Activated naive CD4-positive, alpha-beta T cell treated with anti-CD3 and anti-CD28 coated beads for 36 hours (primary cell): ENCODE measurements at regions of chr1 and their contacts with region 1.

Region 1: GRCh38 chr1:67685067-67685557 is at the start of gene GADD45A:
- DNase-seq: peak; percentile 98
- H3K4me3 Mint-ChIP-seq: peak within 1 kb of the TSS; percentile 90
- H3K27ac Mint-ChIP-seq: peak within 1 kb of the TSS; percentile 92
- H3K4me1 Mint-ChIP-seq: peaks cover 46% of the 10 kb centered on the region
- H3K27me3 Mint-ChIP-seq: no peaks in the 10 kb centered on the region
- total RNA-seq, gene GADD45A: 47.0 to 48.3 TPM

Region 2: DNA sequence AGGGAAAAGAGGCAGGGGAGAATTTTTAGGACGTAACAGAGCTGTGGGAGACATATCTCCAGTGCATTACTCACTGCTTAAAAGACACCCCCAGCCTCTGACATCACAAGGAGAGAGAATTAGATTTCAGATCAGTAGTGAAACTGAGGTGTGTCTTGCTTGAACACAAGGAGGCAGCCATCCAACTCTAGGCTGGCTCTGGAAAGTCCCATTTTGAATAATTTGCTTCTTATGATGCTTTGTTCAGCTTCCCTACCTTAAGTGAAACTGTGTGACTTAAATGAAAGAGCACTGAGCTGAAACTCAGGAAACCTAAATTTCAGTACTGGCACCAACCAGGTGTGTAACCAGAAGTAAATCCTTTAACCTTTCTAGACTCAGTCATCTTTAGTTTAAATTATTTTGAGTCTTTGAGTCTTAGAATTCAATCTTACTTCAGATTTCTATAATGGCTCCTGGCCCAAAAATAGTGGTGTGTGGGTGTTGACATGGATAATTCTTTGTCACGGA is 1402.7 kb before region 1 on chr1:
- CTCF ChIA-PET with region 1: no interaction called
- intact Hi-C with region 1: loop called (anchors 10 kb)
- DNase-seq: peak; percentile 89
- H3K4me3 Mint-ChIP-seq: peak overlapping the region; percentile 17
- H3K27ac Mint-ChIP-seq: peak overlapping the region; percentile 89
- H3K4me1 Mint-ChIP-seq: peaks cover 87% of the 10 kb centered on the region
- H3K27me3 Mint-ChIP-seq: no peaks in the 10 kb centered on the region

Region 3: GRCh38 chr1:66929999-66930822 is 754.9 kb before region 1 on chr1:
- CTCF ChIA-PET with region 1: no interaction called
- intact Hi-C with region 1: loop called (anchors 1 kb)
- DNase-seq: peak; percentile 92
- H3K4me3 Mint-ChIP-seq: peak overlapping the region; percentile 84
- H3K27ac Mint-ChIP-seq: peak overlapping the region; percentile 92
- H3K4me1 Mint-ChIP-seq: peaks cover 51% of the 10 kb centered on the region
- H3K27me3 Mint-ChIP-seq: no peaks in the 10 kb centered on the region

Region 4: GRCh38 chr1:67174716-67175284 is 510.3 kb before region 1 on chr1:
- CTCF ChIA-PET with region 1: no interaction called
- intact Hi-C with region 1: loop called (anchors 1 kb)
- DNase-seq: peak; percentile 63
- H3K4me3 Mint-ChIP-seq: peak overlapping the region; percentile 7
- H3K27ac Mint-ChIP-seq: peak overlapping the region; percentile 99
- H3K4me1 Mint-ChIP-seq: peaks cover 81% of the 10 kb centered on the region
- H3K27me3 Mint-ChIP-seq: no peaks in the 10 kb centered on the region

Region 5: GRCh38 chr1:67339623-67340343 is 345.3 kb before region 1 on chr1:
- CTCF ChIA-PET with region 1: no interaction called
- intact Hi-C with region 1: loop called (anchors 1 kb)
- DNase-seq: peak; percentile 75
- H3K4me3 Mint-ChIP-seq: peak overlapping the region; percentile 1
- H3K27ac Mint-ChIP-seq: peak overlapping the region; percentile 97
- H3K4me1 Mint-ChIP-seq: peaks cover 83% of the 10 kb centered on the region
- H3K27me3 Mint-ChIP-seq: no peaks in the 10 kb centered on the region

Region 6: GRCh38 chr1:67372136-67372535 is 313.0 kb before region 1 on chr1:
- CTCF ChIA-PET with region 1: no interaction called
- intact Hi-C with region 1: no loop called
- DNase-seq: no peak
- H3K4me3 Mint-ChIP-seq: no peak overlapping the region
- H3K27ac Mint-ChIP-seq: no peak overlapping the region
- H3K4me1 Mint-ChIP-seq: peaks cover 1% of the 10 kb centered on the region
- H3K27me3 Mint-ChIP-seq: no peaks in the 10 kb centered on the region

Region 7: DNA sequence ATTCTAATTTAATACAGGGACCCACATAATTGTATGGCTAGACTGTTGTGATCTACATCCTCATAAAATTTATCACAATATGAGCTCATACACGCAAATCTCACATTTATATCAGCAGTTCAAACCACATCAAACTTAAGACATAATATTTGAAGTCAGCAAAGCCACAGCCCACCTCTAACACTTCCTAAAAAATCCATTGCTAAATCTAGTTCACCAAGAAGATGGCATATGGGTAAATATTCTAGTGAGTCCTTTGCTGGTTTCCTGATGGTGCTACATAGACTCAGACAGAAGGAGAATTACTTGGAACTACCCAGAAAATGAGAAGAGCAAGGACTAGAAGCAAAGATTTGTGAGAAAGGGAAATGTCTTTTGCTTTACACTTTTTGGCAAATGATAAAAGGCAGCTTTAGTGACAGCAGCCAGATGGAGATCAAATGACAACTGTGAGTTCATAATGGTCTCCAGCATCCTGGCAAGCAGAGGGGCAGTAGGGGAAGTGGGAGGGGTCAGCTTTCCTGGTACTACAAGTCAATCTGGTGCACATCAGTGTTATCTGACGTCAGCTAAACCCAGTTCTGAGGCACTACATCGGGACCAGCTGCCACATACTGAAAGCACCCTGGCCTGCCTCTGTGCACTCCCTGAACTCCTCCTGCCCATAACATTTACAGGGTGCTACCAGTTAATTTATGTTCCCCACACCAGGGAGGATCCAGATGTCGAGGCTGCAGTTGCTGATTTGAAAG is 10.7 kb before region 1 on chr1:
- CTCF ChIA-PET with region 1: interaction called, 5 read pairs
- intact Hi-C with region 1: loop called (anchors 1 kb)
- DNase-seq: peak; percentile 82
- H3K4me3 Mint-ChIP-seq: peak overlapping the region; percentile 16
- H3K27ac Mint-ChIP-seq: peak overlapping the region; percentile 85
- H3K4me1 Mint-ChIP-seq: peaks cover 22% of the 10 kb centered on the region
- H3K27me3 Mint-ChIP-seq: no peaks in the 10 kb centered on the region

Region 8: DNA sequence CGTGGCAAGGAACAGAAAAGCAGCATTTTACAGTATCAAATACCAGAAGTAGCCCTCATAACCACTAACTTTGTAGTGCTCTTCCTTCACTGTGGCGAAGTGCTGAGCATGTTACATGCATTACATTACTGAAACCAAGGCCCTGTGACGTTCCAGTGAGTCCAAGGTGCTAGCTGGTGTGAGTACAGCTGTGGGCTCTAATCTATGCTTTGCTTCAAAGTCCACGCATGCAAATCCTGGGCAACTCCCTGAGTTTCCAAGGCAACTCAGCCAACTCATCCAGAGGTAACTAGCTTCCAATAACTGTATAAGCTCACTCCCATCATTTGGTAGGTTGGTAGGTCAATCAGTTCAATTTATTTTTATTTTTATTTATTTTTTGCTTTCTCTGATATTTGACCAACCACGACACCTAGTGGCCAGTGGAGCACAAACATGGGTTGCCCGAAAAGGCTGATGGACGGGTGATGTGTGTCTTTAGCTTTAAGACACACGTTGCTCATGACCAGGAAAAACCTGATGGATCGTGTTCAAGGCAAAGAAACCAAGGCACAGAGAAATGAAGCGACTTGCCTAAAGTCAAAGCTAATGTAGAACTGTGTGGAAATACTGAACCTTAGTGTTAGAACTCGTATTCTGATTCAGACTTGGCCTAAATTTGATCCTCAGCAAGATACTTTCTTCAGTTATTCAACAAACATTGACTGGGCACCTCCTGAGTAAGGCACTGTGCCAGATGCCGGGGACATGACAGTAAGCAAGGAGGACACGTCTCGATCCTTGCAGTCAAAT is 75.1 kb after region 1 on chr1:
- CTCF ChIA-PET with region 1: interaction called, 27 read pairs
- intact Hi-C with region 1: loop called (anchors 1 kb)
- DNase-seq: peak; percentile 76
- H3K4me3 Mint-ChIP-seq: no peak overlapping the region
- H3K27ac Mint-ChIP-seq: no peak overlapping the region
- H3K4me1 Mint-ChIP-seq: no peaks in the 10 kb centered on the region
- H3K27me3 Mint-ChIP-seq: peaks cover 19% of the 10 kb centered on the region